ENCODE measurements at regions of chr1 and their contacts with region 1.

Region 1: DNA sequence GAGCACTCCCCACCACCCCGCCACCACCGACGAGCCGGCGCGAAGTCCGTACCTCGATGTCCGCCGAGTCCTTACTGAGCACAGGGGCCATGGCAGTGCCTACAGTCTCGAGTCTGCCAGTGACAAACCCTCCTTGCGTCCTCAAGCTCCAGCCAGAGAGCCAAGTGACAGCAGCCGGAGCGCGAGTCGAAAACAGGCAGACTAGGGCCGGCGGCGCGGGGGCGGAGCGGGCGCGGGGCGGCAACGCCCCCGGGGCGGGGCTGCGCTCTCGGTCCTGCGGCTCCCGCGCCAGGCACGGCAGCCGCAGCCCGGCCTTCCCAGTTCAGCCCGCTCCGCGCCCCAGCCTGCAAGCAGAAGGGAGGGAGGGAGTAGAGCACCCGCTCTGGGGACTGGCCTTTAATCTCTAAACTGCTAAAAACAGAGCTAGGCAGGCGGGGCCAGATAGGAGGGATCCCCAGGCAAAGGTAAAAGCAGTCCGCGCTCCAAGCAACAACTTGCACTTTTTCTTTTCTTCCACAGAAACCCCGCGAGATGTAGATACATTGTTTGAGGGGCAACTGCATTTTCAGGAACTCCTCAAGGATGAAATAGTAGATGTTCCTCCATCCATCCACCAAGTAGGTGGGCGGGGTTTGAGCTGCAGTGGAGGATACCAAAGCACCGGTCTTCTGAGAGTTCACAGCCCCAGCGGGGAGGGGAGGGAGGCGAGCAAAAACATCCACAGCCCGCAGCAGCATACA is at the start of gene DPYD:
- DNase-seq: peak; percentile 51 to 93
- H3K4me3 ChIP-seq: peak within 1 kb of the TSS; percentile 97 to 100
- H3K27ac ChIP-seq: peak within 1 kb of the TSS; percentile 86 to 94
- H3K4me1 ChIP-seq: peaks cover 0 to 5% of the 10 kb centered on the region in 2 donors
- H3K27me3 ChIP-seq: no peaks in the 10 kb centered on the region
- CTCF ChIP-seq: no peak
- total RNA-seq, gene DPYD: 22.9 TPM

Region 2: GRCh38 chr1:98323906-98324358 is 402.9 kb after region 1 on chr1:
- intact Hi-C with region 1: loop called (anchors 10 kb)
- DNase-seq: peak in 1 of 2 donors; percentile 68
- H3K4me3 ChIP-seq: no peak overlapping the region
- H3K27ac ChIP-seq: peak overlapping the region; percentile 58 to 69
- H3K4me1 ChIP-seq: peaks cover 11 to 33% of the 10 kb centered on the region in 2 donors
- H3K27me3 ChIP-seq: no peaks in the 10 kb centered on the region
- CTCF ChIP-seq: no peak

Region 3: GRCh38 chr1:98661544-98662268 is 740.7 kb after region 1 on chr1 and contains the start of gene SNX7:
- intact Hi-C with region 1: loop called (anchors 10 kb)
- DNase-seq: peak; percentile 23 to 90
- H3K4me3 ChIP-seq: peak within 1 kb of the TSS; percentile 86 to 95
- H3K27ac ChIP-seq: peak within 1 kb of the TSS; percentile 93 to 95
- H3K4me1 ChIP-seq: peaks cover 0 to 18% of the 10 kb centered on the region in 2 donors
- H3K27me3 ChIP-seq: no peaks in the 10 kb centered on the region
- CTCF ChIP-seq: peak; percentile 18 to 42 (median 30)
- total RNA-seq, gene SNX7: 6.2 TPM